CD8-positive, alpha-beta T cell (primary cell): ENCODE measurements at regions of chr12 and their contacts with region 1.

Region 1: DNA sequence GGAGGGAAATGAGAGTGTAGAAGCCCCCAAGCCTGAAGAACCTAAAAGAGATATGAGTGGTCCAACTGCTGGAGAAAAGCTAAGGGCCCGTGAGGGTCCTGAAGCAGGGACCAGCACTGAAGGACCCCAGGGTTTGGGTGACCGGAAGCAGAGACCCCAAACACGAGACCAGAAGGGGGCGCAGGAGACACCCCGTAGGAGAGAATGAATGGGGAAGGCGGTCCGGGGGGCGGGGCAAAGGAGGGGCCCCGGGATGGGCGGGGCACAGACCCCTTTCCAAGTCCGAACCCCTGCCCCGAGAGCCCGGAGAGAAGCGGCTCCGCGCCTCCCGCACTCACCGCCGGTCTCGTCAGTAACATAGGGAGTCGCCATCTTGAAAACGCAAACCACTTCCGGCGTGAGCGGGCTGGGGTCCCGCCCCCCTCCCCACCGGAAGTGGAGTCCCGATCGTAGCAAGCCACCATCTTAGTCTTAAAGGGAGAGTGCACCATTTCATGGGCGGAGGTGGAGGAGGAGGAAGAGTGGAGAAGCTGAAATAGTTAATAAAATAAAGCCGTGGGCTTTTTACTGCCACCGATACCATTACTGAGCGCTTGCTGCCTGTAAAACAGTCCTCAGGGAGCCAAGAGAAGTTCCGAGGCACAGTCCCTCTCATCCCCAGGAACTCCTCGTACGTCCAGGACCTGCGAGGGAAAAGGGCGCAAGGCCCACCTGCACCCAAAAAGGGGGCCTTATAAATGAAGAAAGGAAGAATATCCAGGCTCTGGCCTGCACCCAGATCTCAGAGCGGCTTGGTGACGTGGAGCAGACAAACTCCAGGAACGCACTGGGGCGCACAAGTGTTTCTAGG is 731 bp downstream of the PYM1 start:
- DNase-seq: peak; percentile 75 to 96 (median 88)
- ATAC-seq: peak; percentile 35
- H3K4me3 ChIP-seq: peak overlapping the region; percentile 90 to 98
- H3K4me3 Mint-ChIP-seq: peak overlapping the region; percentile 99
- H3K27ac ChIP-seq: peak overlapping the region; percentile 65 to 80
- H3K27ac Mint-ChIP-seq: peak overlapping the region; percentile 95
- H3K4me1 ChIP-seq: peaks cover 40% of the 10 kb centered on the region
- H3K4me1 Mint-ChIP-seq: peaks cover 51% of the 10 kb centered on the region
- H3K27me3 ChIP-seq: no peaks in the 10 kb centered on the region
- H3K27me3 Mint-ChIP-seq: no peaks in the 10 kb centered on the region
- CTCF ChIP-seq: peak; percentile 70

Region 2: GRCh38 chr12:55829967-55830600 is 96.9 kb before region 1 on chr12:
- CTCF ChIA-PET with region 1: interaction called, 14 read pairs
- POLR2A ChIA-PET with region 1: interaction called, 68 read pairs
- intact Hi-C with region 1: loop called (anchors 1 kb)
- DNase-seq: peak in 7 of 9 experiments; percentile 15 to 63 (median 48)
- ATAC-seq: peak; percentile 16
- H3K4me3 ChIP-seq: peak overlapping the region; percentile 65 to 93
- H3K4me3 Mint-ChIP-seq: peak overlapping the region; percentile 99
- H3K27ac ChIP-seq: peak overlapping the region; percentile 71 to 79
- H3K27ac Mint-ChIP-seq: peak overlapping the region; percentile 95
- H3K4me1 ChIP-seq: peaks cover 45% of the 10 kb centered on the region
- H3K4me1 Mint-ChIP-seq: peaks cover 56% of the 10 kb centered on the region
- H3K27me3 ChIP-seq: no peaks in the 10 kb centered on the region
- H3K27me3 Mint-ChIP-seq: no peaks in the 10 kb centered on the region
- CTCF ChIP-seq: no peak

Region 3: DNA sequence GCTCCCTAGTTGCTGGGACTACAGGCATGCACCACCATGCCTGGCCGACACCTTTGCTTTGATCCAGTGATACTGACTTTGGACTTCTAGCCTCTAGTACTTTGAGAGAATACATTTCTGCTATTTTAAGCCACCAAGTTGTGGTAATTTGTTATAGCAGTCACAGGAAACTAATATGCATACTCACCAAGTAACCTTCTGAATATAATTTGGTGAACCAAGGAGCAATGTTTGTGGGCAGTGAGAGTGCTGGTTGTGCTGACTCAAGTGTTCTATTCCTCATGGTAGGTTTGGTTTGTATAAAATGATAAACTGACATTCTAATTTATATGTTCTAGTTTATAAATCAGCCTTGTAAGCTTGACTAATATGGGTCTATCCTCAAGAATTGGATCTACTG is 41.9 kb before region 1 on chr12:
- CTCF ChIA-PET with region 1: no interaction called
- POLR2A ChIA-PET with region 1: no interaction called
- intact Hi-C with region 1: no loop called
- DNase-seq: no peak
- ATAC-seq: no peak
- H3K4me3 ChIP-seq: no peak overlapping the region
- H3K4me3 Mint-ChIP-seq: no peak overlapping the region
- H3K27ac ChIP-seq: no peak overlapping the region
- H3K27ac Mint-ChIP-seq: no peak overlapping the region
- H3K4me1 ChIP-seq: no peaks in the 10 kb centered on the region
- H3K4me1 Mint-ChIP-seq: peaks cover 7% of the 10 kb centered on the region
- H3K27me3 ChIP-seq: no peaks in the 10 kb centered on the region
- H3K27me3 Mint-ChIP-seq: peaks cover 2% of the 10 kb centered on the region
- CTCF ChIP-seq: no peak

Region 4: GRCh38 chr12:55966408-55967281 is 39.7 kb after region 1 on chr12 and contains the start of gene CDK2:
- CTCF ChIA-PET with region 1: interaction called, 3 read pairs
- POLR2A ChIA-PET with region 1: interaction called, 3 read pairs
- intact Hi-C with region 1: loop called in 1 of 2 experiments (anchors 2 kb)
- DNase-seq: peak; percentile 61 to 92 (median 91)
- ATAC-seq: peak; percentile 98
- H3K4me3 ChIP-seq: peak within 1 kb of the TSS; percentile 70 to 81
- H3K4me3 Mint-ChIP-seq: peak within 1 kb of the TSS; percentile 90
- H3K27ac ChIP-seq: peak within 1 kb of the TSS; percentile 41 to 46
- H3K27ac Mint-ChIP-seq: peak within 1 kb of the TSS; percentile 85
- H3K4me1 ChIP-seq: peaks cover 18% of the 10 kb centered on the region
- H3K4me1 Mint-ChIP-seq: peaks cover 34% of the 10 kb centered on the region
- H3K27me3 ChIP-seq: no peaks in the 10 kb centered on the region
- H3K27me3 Mint-ChIP-seq: no peaks in the 10 kb centered on the region
- CTCF ChIP-seq: no peak
- total RNA-seq, gene CDK2: 12.8 to 13.5 TPM

Region 5: DNA sequence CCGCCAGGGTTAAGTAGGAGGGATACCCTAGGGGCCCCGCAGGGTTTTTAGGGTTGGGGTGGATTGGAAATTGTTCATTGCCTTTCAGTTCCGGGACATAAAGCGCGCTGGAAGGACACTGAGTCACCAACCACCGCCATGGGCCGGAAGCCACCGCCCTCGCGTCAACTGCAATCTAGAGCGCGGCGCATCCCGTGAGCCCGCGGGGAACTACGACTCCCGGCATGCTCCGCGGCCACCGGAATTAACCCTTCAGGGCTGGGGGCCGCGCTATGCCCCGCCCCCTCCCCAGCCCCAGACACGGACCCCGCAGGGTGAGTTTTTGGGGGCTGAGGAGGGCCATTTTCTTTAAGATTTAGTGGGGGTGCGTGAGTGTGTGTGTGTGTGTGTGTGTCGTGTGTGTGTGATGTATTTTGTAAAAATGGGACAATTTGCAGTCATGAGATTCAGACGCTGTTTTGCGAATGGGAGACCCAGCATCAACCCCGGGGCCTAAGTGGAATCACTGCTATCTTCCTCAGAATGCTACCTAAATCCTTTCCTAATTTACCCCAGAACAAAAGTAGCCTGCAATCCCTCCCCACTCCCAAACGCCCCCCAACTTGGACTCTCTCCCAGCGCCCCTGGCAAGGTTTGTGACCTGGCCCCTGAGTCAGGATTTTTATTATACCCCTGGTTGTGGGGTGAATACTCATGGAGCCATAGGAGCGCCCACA is 225.5 kb after region 1 on chr12 and contains the start of gene MYL6B:
- CTCF ChIA-PET with region 1: no interaction called
- POLR2A ChIA-PET with region 1: no interaction called
- intact Hi-C with region 1: loop called in 1 of 2 experiments (anchors 2 kb)
- DNase-seq: peak; percentile 80 to 96 (median 93)
- ATAC-seq: peak; percentile 90
- H3K4me3 ChIP-seq: peak within 1 kb of the TSS; percentile 65 to 95
- H3K4me3 Mint-ChIP-seq: peak within 1 kb of the TSS; percentile 90
- H3K27ac ChIP-seq: peak within 1 kb of the TSS; percentile 75 to 90
- H3K27ac Mint-ChIP-seq: peak within 1 kb of the TSS; percentile 99
- H3K4me1 ChIP-seq: peaks cover 30% of the 10 kb centered on the region
- H3K4me1 Mint-ChIP-seq: peaks cover 29% of the 10 kb centered on the region
- H3K27me3 ChIP-seq: no peaks in the 10 kb centered on the region
- H3K27me3 Mint-ChIP-seq: no peaks in the 10 kb centered on the region
- CTCF ChIP-seq: no peak
- total RNA-seq, gene MYL6B: 4.0 to 5.9 TPM

Region 6: GRCh38 chr12:56636675-56637540 is 709.9 kb after region 1 on chr12:
- CTCF ChIA-PET with region 1: no interaction called
- POLR2A ChIA-PET with region 1: no interaction called
- intact Hi-C with region 1: loop called in 1 of 2 experiments (anchors 5 kb)
- DNase-seq: peak; percentile 91 to 99 (median 97)
- ATAC-seq: peak; percentile 71
- H3K4me3 ChIP-seq: peak overlapping the region; percentile 58 to 79
- H3K4me3 Mint-ChIP-seq: peak overlapping the region; percentile 98
- H3K27ac ChIP-seq: peak overlapping the region; percentile 79 to 87
- H3K27ac Mint-ChIP-seq: peak overlapping the region; percentile 97
- H3K4me1 ChIP-seq: peaks cover 45% of the 10 kb centered on the region
- H3K4me1 Mint-ChIP-seq: peaks cover 57% of the 10 kb centered on the region
- H3K27me3 ChIP-seq: no peaks in the 10 kb centered on the region
- H3K27me3 Mint-ChIP-seq: no peaks in the 10 kb centered on the region
- CTCF ChIP-seq: peak; percentile 71